ENCODE measurements at regions of chr17 and their contacts with region 1.

Region 1: DNA sequence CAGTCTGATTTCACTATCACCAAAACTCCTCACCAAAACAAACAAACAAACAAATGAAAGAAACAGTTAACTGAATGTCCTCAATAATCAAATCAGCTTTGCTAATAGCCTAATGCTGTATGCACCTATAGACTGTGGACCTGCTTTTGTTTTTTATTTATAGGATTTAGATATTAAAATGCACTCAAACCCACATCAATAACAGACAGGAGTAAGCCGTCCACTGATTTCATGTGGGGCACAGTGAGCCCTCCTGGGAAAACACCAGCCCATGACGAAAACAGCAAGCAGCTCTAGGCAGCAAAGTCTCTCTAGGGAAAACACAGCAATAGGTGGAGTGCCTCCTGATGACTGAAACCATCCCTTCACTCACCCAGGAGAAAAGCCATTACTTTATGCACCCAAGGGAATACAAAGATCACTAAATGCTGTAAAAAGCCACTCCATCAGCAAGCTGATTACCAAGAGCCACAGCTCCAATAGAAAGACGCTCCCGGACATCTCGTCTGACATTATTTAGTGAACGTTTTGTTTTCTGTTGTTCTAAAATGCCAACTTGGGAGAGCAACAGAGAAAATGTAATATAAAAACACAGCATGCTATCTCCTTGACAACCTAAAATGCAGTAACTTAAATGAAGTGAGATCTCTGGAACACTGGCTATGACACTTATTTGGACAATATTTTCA is 47.8 kb downstream of the ANKFY1 start:
- DNase-seq: no peak
- H3K4me3 ChIP-seq: no peak overlapping the region
- H3K27ac ChIP-seq: peak overlapping the region; percentile 1
- H3K4me1 ChIP-seq: peaks cover 36% of the 10 kb centered on the region
- H3K27me3 ChIP-seq: no peaks in the 10 kb centered on the region
- CTCF ChIP-seq: no peak
- POLR2A ChIP-seq: no peak

Region 2: GRCh38 chr17:4175921-4176807 is 39.9 kb before region 1 on chr17:
- intact Hi-C with region 1: no loop called
- DNase-seq: no peak
- H3K4me3 ChIP-seq: no peak overlapping the region
- H3K27ac ChIP-seq: no peak overlapping the region
- H3K4me1 ChIP-seq: no peaks in the 10 kb centered on the region
- H3K27me3 ChIP-seq: no peaks in the 10 kb centered on the region
- CTCF ChIP-seq: no peak
- POLR2A ChIP-seq: no peak

Region 3: DNA sequence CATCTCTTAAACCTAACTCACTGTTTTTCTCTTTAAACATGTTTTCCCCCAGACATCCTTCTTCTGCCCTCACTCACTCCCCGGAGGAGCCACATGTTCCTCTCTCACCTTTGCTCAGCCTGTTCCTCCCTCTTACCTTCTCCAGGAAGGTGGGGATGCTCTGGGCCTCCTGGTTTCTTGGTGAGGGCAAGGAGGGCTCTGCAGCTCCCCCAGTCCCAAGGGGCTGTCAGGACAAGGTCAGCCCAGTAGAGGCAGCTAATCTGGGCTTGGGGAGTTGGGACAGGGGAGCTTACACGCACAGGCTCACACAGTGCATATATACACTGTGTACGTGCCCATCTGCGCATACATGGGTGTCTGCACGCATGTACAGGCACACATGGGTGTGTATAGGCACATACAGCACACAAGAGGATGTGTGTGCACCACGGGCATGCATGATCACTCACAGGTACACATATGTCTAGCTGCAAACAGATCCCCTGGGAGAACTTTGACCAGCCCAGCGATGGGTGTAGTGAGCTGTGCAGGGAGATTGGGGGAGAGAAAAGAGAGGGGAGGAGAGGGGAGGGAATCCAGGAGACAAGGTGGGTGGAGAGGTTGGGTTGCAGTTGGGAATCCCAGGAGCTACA is 189.1 kb after region 1 on chr17:
- intact Hi-C with region 1: loop called (anchors 2 kb)
- DNase-seq: no peak
- H3K4me3 ChIP-seq: no peak overlapping the region
- H3K27ac ChIP-seq: no peak overlapping the region
- H3K4me1 ChIP-seq: no peaks in the 10 kb centered on the region
- H3K27me3 ChIP-seq: no peaks in the 10 kb centered on the region
- CTCF ChIP-seq: no peak
- POLR2A ChIP-seq: no peak

Region 4: DNA sequence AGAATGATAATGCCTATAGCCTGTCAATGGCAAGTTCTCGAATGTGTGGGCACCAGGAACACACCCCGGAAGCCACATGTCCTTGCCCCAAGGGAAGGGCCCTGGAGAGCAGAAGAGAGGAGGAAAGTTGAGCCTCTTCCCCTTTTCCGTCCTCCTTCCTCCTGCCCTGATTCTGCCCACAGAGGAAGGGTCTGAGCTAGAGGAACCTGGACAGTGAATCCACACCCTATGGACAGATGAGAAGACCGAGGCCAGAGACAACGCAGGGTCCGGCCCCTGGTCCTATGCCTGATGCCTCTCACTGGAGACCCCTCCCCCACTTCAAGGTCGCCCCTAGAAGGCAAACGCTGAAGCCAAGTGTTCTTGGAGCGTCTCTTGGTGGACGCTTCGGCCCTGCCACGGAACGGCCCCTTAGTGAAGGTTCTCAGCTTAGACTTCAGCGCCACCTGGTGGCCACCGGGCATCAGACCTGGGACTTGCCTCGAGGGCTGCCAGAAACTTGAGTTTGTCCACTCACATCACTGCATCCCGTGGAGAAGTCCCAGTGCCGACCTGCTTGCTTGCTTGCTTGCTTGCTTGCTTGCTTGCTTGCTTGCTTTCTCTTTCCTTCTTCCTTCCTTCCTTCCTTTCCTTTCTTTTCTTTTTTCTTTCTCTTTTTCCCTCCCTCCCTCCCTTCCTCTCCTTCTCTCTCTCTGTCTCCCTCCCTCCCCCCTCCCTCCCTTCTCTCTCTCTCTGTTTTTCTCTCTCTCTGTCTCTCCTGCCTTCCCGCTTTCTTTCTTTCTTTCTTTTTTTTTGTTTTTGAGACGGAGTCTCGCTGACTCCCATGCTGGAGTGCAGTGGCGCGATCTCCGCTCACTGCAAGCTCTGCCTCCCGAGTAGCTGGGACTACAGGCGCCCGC is 197.2 kb after region 1 on chr17:
- intact Hi-C with region 1: loop called (anchors 2 kb)
- DNase-seq: no peak
- H3K4me3 ChIP-seq: no peak overlapping the region
- H3K27ac ChIP-seq: peak overlapping the region; percentile 59
- H3K4me1 ChIP-seq: no peaks in the 10 kb centered on the region
- H3K27me3 ChIP-seq: no peaks in the 10 kb centered on the region
- CTCF ChIP-seq: peak; percentile 97
- POLR2A ChIP-seq: no peak